Naive thymus-derived CD4-positive, alpha-beta T cell (primary cell): ENCODE measurements at regions of chr14 and their contacts with region 1.

Region 1: GRCh38 chr14:90556012-90556477 is 159.2 kb downstream of the CALM1 start:
- DNase-seq: no peak
- ATAC-seq: no peak
- H3K4me3 ChIP-seq: no peak overlapping the region
- H3K4me3 Mint-ChIP-seq: no peak overlapping the region
- H3K27ac ChIP-seq: no peak overlapping the region
- H3K27ac Mint-ChIP-seq: no peak overlapping the region
- H3K4me1 ChIP-seq: no peaks in the 10 kb centered on the region
- H3K4me1 Mint-ChIP-seq: no peaks in the 10 kb centered on the region
- H3K27me3 ChIP-seq: no peaks in the 10 kb centered on the region
- H3K27me3 Mint-ChIP-seq: peaks cover 0 to 2% (median 0%) of the 10 kb centered on the region in 5 donors

Region 2: DNA sequence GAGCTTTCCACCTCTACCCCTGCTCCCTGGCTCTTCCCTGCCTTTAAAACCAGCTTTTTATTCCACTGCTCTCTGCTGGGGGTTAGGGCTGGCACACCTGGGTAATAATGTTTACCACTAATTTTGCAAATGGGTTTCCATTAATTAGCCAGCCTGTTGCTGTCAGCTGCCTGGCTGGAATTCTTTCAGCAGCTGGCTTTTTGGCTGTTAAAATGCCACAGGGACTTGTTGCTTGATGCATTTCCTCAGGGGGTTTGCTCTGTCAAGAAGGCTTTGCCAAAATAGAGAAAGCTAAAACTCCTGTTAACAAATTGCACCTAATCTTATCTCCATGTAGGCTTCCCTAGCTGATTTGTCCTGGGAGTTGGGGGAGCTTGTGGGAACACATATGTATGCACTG is 351.5 kb before region 1 on chr14:
- CTCF ChIA-PET with region 1: no interaction called
- POLR2A ChIA-PET with region 1: no interaction called
- intact Hi-C with region 1: no loop called
- DNase-seq: no peak
- ATAC-seq: no peak
- H3K4me3 ChIP-seq: no peak overlapping the region
- H3K4me3 Mint-ChIP-seq: no peak overlapping the region
- H3K27ac ChIP-seq: no peak overlapping the region
- H3K27ac Mint-ChIP-seq: no peak overlapping the region
- H3K4me1 ChIP-seq: no peaks in the 10 kb centered on the region
- H3K4me1 Mint-ChIP-seq: no peaks in the 10 kb centered on the region
- H3K27me3 ChIP-seq: no peaks in the 10 kb centered on the region
- H3K27me3 Mint-ChIP-seq: peaks cover 5 to 34% (median 10%) of the 10 kb centered on the region in 5 donors

Region 3: GRCh38 chr14:90574188-90575131 is 18.4 kb after region 1 on chr14:
- CTCF ChIA-PET with region 1: no interaction called
- POLR2A ChIA-PET with region 1: no interaction called
- intact Hi-C with region 1: loop called in 1 of 2 experiments (anchors 2 kb)
- DNase-seq: no peak
- ATAC-seq: no peak
- H3K4me3 ChIP-seq: no peak overlapping the region
- H3K4me3 Mint-ChIP-seq: no peak overlapping the region
- H3K27ac ChIP-seq: no peak overlapping the region
- H3K27ac Mint-ChIP-seq: no peak overlapping the region
- H3K4me1 ChIP-seq: no peaks in the 10 kb centered on the region
- H3K4me1 Mint-ChIP-seq: no peaks in the 10 kb centered on the region
- H3K27me3 ChIP-seq: no peaks in the 10 kb centered on the region
- H3K27me3 Mint-ChIP-seq: no peaks in the 10 kb centered on the region